ENCODE measurements at regions of chr4 and their contacts with region 1.

Region 1: GRCh38 chr4:48269861-48270522 is 354 bp upstream of the TEC start:
- DNase-seq: peak; percentile 85 to 94
- H3K4me3 ChIP-seq: peak overlapping the region; percentile 58
- H3K27ac ChIP-seq: peak overlapping the region; percentile 97
- H3K4me1 ChIP-seq: peaks cover 23% of the 10 kb centered on the region
- H3K27me3 ChIP-seq: no peaks in the 10 kb centered on the region
- CTCF ChIP-seq: peak; percentile 39; the same call in 1 of the 2 replicates

Region 2: GRCh38 chr4:47914220-47914925 is 355.6 kb before region 1 on chr4 and contains the start of gene NFXL1:
- CTCF ChIA-PET with region 1: no interaction called
- POLR2A ChIA-PET with region 1: no interaction called
- intact Hi-C with region 1: loop called (anchors 5 kb)
- DNase-seq: peak; percentile 90 to 93
- H3K4me3 ChIP-seq: peak within 1 kb of the TSS; percentile 89
- H3K27ac ChIP-seq: peak within 1 kb of the TSS; percentile 84
- H3K4me1 ChIP-seq: peaks cover 17% of the 10 kb centered on the region
- H3K27me3 ChIP-seq: no peaks in the 10 kb centered on the region
- CTCF ChIP-seq: no peak
- total RNA-seq, gene NFXL1: 15.5 and 15.7 TPM in 2 replicates

Region 3: GRCh38 chr4:48254381-48255071 is 15.5 kb before region 1 on chr4:
- CTCF ChIA-PET with region 1: no interaction called
- POLR2A ChIA-PET with region 1: no interaction called
- intact Hi-C with region 1: no loop called
- DNase-seq: no peak
- H3K4me3 ChIP-seq: no peak overlapping the region
- H3K27ac ChIP-seq: no peak overlapping the region
- H3K4me1 ChIP-seq: no peaks in the 10 kb centered on the region; the same call in 1 of the 2 replicates
- H3K27me3 ChIP-seq: no peaks in the 10 kb centered on the region
- CTCF ChIP-seq: no peak

Measured in PC-9 (cell line).